ENCODE measurements at regions of chr3 and their contacts with region 1.

Region 1: GRCh38 chr3:52998730-52999509 is 47.0 kb downstream of the SFMBT1 start:
- DNase-seq: no peak
- ATAC-seq: peak in 1 of 4 donors; percentile 25
- H3K4me3 ChIP-seq: no peak overlapping the region
- H3K27ac ChIP-seq: no peak overlapping the region
- H3K4me1 ChIP-seq: no peaks in the 10 kb centered on the region
- H3K27me3 ChIP-seq: no peaks in the 10 kb centered on the region
- CTCF ChIP-seq: no peak

Region 2: GRCh38 chr3:52792961-52793695 is 205.8 kb before region 1 on chr3:
- intact Hi-C with region 1: no loop called
- DNase-seq: no peak
- ATAC-seq: no peak
- H3K4me3 ChIP-seq: no peak overlapping the region
- H3K27ac ChIP-seq: no peak overlapping the region
- H3K4me1 ChIP-seq: no peaks in the 10 kb centered on the region
- H3K27me3 ChIP-seq: no peaks in the 10 kb centered on the region
- CTCF ChIP-seq: no peak

Region 3: GRCh38 chr3:52983336-52983807 is 15.5 kb before region 1 on chr3:
- intact Hi-C with region 1: loop called in 1 of 2 experiments (anchors 1 kb)
- DNase-seq: no peak
- ATAC-seq: no peak
- H3K4me3 ChIP-seq: no peak overlapping the region
- H3K27ac ChIP-seq: peak overlapping the region; percentile 56
- H3K4me1 ChIP-seq: peaks cover 33% of the 10 kb centered on the region
- H3K27me3 ChIP-seq: no peaks in the 10 kb centered on the region
- CTCF ChIP-seq: no peak

Region 4: GRCh38 chr3:53035825-53036619 is 37.1 kb after region 1 on chr3:
- intact Hi-C with region 1: loop called in 1 of 2 experiments (anchors 5 kb)
- DNase-seq: no peak
- ATAC-seq: no peak
- H3K4me3 ChIP-seq: no peak overlapping the region
- H3K27ac ChIP-seq: no peak overlapping the region
- H3K4me1 ChIP-seq: peaks cover 26% of the 10 kb centered on the region
- H3K27me3 ChIP-seq: no peaks in the 10 kb centered on the region
- CTCF ChIP-seq: no peak